ENCODE measurements at regions of chr14 and their contacts with region 1.

Region 1: DNA sequence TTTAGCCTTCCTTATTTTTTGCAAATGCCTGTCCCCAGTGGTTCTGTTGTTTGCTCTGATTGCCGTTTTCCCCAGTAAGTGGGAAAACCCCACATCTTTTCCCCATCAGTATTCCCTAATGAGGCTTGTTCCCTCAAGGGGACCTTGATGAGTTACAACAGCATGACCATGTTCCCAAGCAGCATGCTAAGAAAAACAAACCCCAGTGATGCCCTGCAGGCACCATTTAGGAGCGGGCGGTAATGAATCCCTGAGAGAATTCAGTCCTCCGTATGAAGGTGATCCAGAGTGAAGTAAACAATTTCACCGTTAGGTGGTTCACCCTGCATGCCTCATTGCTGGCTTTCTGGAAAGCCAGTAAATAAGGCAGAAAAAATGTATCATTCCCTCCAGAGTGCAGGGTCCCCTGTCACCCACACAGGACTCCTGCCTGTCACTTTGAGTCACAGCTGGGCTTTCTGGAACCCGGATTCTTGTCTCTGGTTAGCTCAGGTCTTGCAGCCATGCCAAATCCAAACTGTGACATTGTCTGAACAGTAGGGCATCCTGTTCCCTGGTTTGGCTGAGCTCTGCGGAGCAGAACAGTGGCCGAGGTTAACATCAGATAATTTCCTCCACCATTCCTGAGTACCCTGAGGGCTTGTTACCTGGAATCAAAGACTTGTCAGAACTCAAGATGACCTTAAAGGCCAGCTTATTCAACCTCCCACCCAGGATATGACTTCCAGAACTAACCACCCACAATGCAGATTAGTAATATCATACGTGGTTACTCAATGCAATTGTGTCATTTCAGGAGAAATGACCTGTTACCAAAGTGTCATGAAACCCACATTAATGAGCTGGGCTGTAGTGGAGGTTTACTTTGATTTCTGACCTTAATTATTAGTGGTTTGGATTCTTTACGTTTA is 222.7 kb downstream of the RGS6 start:
- DNase-seq: no peak
- H3K4me3 Mint-ChIP-seq: no peak overlapping the region
- H3K27ac Mint-ChIP-seq: no peak overlapping the region
- H3K4me1 Mint-ChIP-seq: peaks cover 8% of the 10 kb centered on the region
- H3K27me3 Mint-ChIP-seq: peaks cover 22% of the 10 kb centered on the region

Region 2: DNA sequence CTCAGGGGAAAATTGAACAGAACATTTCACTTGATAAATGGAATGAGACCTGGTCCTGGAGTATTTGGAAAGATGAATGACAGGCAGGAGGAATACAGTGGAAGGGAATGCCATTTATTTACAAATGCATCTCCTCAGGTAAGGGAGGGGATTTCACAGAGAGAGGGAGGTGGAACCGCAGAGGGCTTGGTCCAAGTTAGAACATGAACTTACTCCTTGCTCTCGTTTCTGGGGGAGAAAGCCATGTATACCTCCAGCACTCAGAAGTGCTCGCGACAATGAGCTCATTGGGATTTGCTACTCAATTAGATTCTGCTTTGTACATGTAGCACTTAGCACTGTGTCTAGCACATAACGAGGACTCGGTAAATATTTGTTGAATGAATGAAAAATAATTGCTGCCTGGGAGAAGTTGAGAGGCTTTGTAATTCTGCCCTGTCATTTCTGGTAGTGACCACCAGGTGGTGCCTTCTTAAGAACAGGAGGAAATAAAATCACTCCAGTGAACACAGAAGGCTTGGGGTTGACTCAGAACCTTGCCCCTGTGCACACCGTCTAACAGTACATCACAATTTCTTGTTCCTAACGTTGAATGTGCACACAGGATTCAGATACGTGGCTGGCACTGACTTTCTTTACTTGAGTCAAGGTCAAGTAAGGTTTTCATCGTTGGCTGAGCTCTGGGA is 131.1 kb before region 1 on chr14:
- intact Hi-C with region 1: loop called (anchors 10 kb)
- DNase-seq: peak; percentile 40
- H3K4me3 Mint-ChIP-seq: no peak overlapping the region
- H3K27ac Mint-ChIP-seq: no peak overlapping the region
- H3K4me1 Mint-ChIP-seq: peaks cover 10% of the 10 kb centered on the region
- H3K27me3 Mint-ChIP-seq: peaks cover 39% of the 10 kb centered on the region

Region 3: DNA sequence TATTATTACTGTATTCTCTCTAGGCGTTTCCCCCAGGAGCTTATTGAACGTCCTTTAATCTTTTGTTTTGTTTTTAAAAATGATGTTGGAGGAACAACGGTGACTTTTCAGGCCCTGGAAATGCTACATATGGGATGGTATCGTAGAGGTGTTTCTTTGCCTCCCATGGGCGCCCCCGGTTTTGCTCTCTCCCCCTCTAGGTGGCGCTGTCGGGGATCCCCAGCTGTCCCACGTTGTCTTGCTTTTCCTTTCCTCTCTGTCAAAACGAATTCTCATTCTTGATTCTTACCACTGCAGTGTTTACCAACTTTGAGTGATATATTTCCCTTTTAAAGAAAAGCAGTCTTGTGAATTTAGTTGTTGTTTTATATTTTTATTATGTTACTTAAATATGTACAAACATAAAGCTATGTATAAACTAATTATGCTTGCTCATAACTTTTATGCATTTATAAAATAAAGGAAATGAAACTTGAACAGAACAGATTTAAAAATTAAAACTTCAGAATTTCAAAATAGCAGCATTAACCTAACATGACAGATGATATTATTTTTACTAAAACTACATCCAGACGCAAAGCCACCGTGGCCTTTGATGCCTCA is 50.9 kb before region 1 on chr14:
- intact Hi-C with region 1: no loop called
- DNase-seq: peak; percentile 15
- H3K4me3 Mint-ChIP-seq: no peak overlapping the region
- H3K27ac Mint-ChIP-seq: no peak overlapping the region
- H3K4me1 Mint-ChIP-seq: no peaks in the 10 kb centered on the region
- H3K27me3 Mint-ChIP-seq: peaks cover 48% of the 10 kb centered on the region